A673 (cell line): ENCODE measurements at regions of chr2 and their contacts with region 1.

Region 1: DNA sequence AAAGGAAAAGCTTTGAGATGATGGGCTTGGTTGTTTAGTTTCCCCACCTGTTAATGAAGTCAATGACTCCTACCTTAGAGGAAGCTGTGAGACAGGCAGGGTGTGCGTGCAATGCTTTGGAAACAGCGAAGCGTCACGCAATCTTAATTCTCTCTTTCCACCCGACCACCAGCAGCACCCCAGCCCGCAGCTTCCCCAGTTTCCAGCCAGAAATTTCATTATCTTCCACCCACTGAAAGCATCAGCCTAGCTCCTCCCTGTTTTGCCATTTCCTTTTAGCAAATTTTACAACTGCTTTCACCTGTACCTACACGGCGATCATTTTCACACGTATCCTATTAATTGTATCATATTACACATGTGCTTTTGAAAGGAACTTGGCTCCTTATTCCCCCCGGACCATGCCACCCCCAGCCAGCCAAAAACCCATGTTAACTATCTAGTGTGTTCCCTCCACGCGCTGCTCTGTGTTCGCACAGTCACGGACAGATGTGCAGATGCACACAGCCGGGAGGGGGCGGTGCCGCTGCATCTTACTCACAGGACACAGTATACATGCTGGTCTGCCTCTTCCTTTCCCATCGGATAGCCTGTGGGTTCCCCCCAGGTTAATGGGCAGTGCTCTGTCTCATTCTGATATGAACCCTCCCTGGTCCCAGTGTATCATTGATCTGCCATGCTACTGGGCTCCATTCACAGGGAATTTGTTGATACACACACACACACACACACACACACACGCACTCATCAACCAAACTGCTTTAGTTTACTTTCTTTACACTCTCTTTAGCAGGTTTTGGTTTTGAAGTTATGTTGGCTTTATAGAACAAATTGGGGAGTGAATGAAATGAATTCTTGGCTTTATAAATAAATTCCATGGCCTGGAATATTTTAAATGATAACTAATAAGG is 22.4 kb downstream of the CYP27C1 start:
- DNase-seq: peak; percentile 89
- H3K4me3 ChIP-seq: peak overlapping the region; percentile 36
- H3K27ac ChIP-seq: no peak overlapping the region
- H3K4me1 ChIP-seq: peaks cover 6% of the 10 kb centered on the region
- H3K27me3 ChIP-seq: no peaks in the 10 kb centered on the region
- CTCF ChIP-seq: peak; percentile 96

Region 2: GRCh38 chr2:127293748-127294562 is 96.2 kb after region 1 on chr2 and contains the start of gene ERCC3:
- CTCF ChIA-PET with region 1: interaction called, 10 read pairs
- POLR2A ChIA-PET with region 1: no interaction called
- intact Hi-C with region 1: loop called (anchors 5 kb)
- DNase-seq: peak; percentile 93
- H3K4me3 ChIP-seq: peak within 1 kb of the TSS; percentile 91
- H3K27ac ChIP-seq: peak within 1 kb of the TSS; percentile 81
- H3K4me1 ChIP-seq: peaks cover 9% of the 10 kb centered on the region
- H3K27me3 ChIP-seq: no peaks in the 10 kb centered on the region
- CTCF ChIP-seq: no peak
- total RNA-seq, gene ERCC3: 69.5 and 70.2 TPM in 2 replicates

Region 3: DNA sequence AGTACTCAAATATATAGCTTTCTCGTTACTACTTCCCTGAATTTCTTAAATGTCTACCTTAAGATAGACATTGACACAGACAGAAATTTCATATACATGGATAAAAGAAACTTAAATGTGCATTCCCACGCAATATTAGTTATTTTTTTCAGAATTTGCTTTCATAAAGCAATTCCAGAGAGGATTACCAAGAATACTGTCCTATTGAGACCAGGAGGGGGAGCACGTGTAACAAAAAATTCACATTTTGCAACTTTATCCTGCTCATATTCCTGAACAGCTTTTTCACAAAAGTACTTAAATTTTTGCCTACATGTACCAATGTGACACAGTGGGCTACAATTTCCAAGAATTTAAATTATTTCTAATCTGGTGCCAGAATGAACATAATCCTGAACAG is 126.9 kb after region 1 on chr2:
- CTCF ChIA-PET with region 1: interaction called, 4 read pairs
- POLR2A ChIA-PET with region 1: no interaction called
- intact Hi-C with region 1: loop called (anchors 5 kb)
- DNase-seq: peak; percentile 66
- H3K4me3 ChIP-seq: no peak overlapping the region
- H3K27ac ChIP-seq: no peak overlapping the region
- H3K4me1 ChIP-seq: no peaks in the 10 kb centered on the region
- H3K27me3 ChIP-seq: no peaks in the 10 kb centered on the region
- CTCF ChIP-seq: peak; percentile 78

Region 4: DNA sequence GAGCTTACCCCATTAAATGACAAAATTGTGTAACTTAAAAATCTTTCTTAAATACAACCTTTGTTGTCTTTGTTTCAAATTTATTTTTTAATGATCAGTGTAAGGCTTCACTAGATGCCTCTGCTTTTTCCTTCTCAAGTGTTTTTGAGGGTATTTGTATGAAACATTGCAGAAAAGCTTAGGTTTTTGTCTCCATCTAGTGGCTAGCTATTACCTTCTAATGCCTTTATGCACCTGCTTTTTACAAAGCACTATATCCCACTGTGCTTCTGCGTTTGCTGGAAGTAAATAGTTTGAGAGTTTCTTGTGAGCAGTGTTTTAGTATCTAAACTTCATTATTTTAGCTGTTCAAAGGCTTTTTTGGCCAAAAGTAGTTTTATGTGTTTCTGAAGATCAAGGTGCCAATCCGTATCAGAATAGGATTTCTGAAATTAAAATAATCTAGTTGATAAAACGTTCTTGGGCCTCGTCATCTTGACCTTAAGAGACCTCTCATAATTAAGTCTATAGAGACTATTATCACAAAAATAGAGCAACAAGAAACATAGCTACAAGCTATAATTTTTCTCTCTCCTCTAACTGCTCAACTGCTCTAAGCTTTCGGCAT is 281.6 kb after region 1 on chr2:
- CTCF ChIA-PET with region 1: interaction called, 14 read pairs
- POLR2A ChIA-PET with region 1: no interaction called
- intact Hi-C with region 1: loop called (anchors 1 kb)
- DNase-seq: peak; percentile 75
- H3K4me3 ChIP-seq: no peak overlapping the region
- H3K27ac ChIP-seq: no peak overlapping the region
- H3K4me1 ChIP-seq: no peaks in the 10 kb centered on the region
- H3K27me3 ChIP-seq: no peaks in the 10 kb centered on the region
- CTCF ChIP-seq: peak; percentile 76

Region 5: DNA sequence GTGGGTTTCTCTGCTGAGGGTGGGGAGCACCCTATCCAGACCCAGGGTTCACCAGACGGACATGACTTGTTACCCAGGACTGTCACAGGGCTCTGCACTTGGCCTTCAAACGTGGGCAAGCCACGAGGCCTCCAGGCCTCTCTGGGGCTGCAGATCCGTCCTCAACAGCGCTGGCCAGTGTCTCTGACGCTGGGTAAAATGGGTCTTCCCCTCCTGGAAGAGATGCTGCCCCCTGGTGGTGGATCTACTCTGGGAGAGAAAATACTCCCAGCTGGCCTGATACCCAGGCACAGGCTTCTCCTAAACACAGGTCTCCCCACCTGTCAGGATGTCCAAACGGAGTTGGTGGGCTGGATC is 451.9 kb after region 1 on chr2:
- CTCF ChIA-PET with region 1: interaction called, 9 read pairs
- POLR2A ChIA-PET with region 1: no interaction called
- intact Hi-C with region 1: loop called (anchors 1 kb)
- DNase-seq: peak; percentile 91
- H3K4me3 ChIP-seq: no peak overlapping the region
- H3K27ac ChIP-seq: no peak overlapping the region
- H3K4me1 ChIP-seq: peaks cover 5% of the 10 kb centered on the region
- H3K27me3 ChIP-seq: no peaks in the 10 kb centered on the region
- CTCF ChIP-seq: peak; percentile 92